Sciatic nerve (tissue), 2 donors: ENCODE measurements at regions of chr11 and their contacts with region 1.

Region 1: DNA sequence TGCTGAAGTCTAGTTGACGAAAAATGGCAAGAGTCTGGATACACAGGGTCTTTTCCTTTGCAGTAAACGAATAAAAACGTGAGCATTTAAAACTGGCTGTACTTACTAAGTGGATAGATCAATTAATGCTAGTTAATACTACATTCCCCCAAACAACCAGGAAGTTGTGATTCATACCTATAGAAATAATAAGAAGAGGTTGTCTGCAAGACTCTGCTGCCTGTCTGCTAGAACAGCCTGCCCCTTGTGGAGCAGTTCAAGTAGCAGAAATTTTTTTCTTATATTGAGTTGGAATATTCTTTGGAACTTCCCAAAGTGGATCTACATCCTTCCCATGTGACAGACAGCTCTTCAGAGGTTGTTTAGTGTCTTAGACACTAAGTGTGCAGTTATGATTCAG is 86.8 kb downstream of the TEAD1 start:
- DNase-seq: no peak
- ATAC-seq: no peak

Region 2: DNA sequence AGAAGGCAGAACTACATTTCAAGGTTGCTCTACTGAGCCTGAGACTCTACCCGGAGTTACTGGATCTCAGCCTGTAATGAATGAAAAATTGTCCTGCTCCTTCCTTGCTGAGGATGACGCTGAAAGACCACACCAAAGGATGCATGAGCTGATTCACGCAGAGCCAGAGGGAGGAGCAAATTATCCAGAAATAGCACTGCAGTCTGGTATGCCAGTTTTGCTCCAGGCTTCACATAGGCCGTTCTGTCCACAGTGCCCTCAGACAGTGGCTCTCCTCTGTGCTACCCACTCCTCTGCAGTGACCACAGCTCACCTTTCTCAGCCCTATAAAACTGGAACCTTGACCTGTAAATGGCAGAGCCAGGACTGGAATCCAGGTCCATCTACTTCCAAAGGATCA is 1060.0 kb before region 1 on chr11:
- intact Hi-C with region 1: loop called (anchors 5 kb)
- DNase-seq: no peak
- ATAC-seq: no peak

Region 3: DNA sequence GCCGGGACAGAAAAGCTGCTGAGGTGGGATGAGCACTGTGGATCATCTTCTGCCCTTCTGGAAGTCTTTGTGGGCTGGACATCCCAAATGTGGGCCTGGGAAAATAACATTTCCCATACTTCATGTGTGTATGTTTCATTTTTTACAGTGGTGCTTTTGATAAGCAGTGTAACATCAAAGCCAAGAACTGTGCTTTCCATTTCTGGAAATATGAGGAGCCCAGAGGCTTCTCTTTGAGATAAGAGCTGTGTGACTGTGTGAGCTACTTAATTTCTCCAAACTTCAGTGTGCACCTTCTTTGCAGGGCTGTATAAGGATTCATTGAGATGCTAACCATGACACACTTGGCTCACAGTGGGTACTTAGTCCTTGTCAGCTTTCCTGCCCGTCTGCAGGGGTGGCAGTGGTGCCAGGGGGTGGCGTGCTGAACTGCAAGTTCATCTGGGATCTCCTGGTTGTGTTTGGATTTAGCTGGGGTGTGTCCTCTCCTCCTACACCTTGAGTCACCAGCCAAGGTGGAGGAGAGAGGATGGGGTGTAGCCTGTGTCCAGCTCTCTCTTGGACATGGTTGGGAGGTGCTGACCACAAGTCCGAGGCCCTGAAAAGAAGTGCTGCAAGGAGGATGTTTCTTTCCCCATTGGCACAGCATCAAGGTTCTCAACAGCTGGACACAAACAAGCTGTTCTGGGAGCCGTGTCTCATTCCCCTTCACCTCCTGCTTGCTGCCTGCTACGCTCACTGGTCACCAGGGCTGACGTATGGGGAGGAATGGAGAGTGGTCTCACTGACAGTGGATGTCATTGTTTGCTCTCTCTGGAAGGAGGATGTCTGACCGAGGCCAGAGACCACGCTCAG is 52.6 kb after region 1 on chr11:
- intact Hi-C with region 1: no loop called
- DNase-seq: no peak
- ATAC-seq: peak; percentile 58

Region 4: GRCh38 chr11:12864316-12865156 is 103.5 kb after region 1 on chr11:
- intact Hi-C with region 1: no loop called
- DNase-seq: no peak
- ATAC-seq: no peak